K562 (cell line): ENCODE measurements at regions of chr6 and their contacts with region 1.

Region 1: DNA sequence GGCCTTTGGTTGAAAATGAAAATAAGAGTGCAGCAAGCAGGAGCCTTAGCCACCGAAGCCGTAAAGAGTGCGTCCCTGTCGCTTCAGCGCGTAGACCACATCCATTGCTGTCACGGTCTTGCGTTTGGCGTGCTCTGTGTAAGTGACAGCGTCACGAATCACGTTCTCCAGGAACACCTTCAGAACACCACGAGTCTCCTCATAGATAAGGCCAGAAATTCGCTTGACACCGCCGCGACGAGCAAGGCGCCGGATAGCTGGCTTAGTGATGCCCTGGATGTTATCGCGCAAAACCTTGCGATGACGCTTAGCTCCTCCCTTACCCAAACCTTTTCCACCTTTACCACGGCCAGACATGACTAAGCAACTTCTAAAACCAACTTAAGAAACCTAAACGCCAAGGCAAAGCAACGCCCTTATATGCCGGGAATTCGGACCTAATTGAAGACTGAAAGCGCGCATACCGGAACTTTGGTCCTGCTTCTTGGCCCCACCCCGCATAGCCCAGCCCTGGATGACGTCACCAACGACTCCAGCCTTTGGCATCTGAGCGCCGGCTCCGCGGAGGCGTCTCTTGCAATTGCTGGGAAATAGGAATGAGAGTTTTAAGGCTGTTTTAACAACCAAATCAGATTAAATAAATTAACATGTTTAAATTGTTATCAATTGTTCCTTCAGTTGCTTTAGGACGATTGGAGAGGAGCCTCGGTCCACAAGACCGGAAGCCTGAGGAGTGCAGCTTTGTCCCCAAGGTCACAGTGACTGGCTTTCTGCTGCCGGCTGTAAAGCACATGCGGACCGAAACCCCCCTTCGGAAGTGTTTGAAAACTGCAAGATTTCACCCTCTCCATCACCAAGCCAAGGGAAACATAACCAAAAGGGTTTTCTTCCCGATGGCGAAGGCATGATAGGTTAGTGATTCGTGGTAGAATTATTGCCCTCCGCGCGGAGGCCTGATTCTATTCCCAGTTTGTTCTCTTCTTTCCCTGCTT is 79.6 kb upstream of the BTN3A2 start:
- DNase-seq: peak; percentile 89 to 100 (median 92)
- ATAC-seq: peak; percentile 84
- H3K4me3 ChIP-seq: peak overlapping the region; percentile 50
- H3K27ac ChIP-seq: peak overlapping the region; percentile 97
- H3K4me1 ChIP-seq: peaks cover 11 to 19% of the 10 kb centered on the region in 2 experiments; a peak in 4 of 5 replicates
- H3K27me3 ChIP-seq: no peaks in the 10 kb centered on the region
- CTCF ChIP-seq: peak in 1 of 3 experiments; percentile 5; a peak in 2 of 6 replicates
- EP300 ChIP-seq: peak; percentile 96
- POLR2A ChIP-seq: peak; percentile 99
- RAD21 ChIP-seq: peak in 1 of 2 experiments; percentile 41; a peak in 3 of 4 replicates

Region 2: GRCh38 chr6:26183581-26184366 is 101.7 kb before region 1 on chr6:
- CTCF ChIA-PET with region 1: no interaction called
- POLR2A ChIA-PET with region 1: interaction called, 11 read pairs
- in situ Hi-C with region 1: no loop called
- intact Hi-C with region 1: no loop called
- DNase-seq: no peak
- ATAC-seq: no peak
- H3K4me3 ChIP-seq: no peak overlapping the region
- H3K27ac ChIP-seq: no peak overlapping the region
- H3K4me1 ChIP-seq: peaks cover 0 to 18% of the 10 kb centered on the region in 2 experiments; a peak in 4 of 5 replicates
- H3K27me3 ChIP-seq: no peaks in the 10 kb centered on the region
- CTCF ChIP-seq: no peak
- EP300 ChIP-seq: no peak
- POLR2A ChIP-seq: no peak
- RAD21 ChIP-seq: no peak

Region 3: DNA sequence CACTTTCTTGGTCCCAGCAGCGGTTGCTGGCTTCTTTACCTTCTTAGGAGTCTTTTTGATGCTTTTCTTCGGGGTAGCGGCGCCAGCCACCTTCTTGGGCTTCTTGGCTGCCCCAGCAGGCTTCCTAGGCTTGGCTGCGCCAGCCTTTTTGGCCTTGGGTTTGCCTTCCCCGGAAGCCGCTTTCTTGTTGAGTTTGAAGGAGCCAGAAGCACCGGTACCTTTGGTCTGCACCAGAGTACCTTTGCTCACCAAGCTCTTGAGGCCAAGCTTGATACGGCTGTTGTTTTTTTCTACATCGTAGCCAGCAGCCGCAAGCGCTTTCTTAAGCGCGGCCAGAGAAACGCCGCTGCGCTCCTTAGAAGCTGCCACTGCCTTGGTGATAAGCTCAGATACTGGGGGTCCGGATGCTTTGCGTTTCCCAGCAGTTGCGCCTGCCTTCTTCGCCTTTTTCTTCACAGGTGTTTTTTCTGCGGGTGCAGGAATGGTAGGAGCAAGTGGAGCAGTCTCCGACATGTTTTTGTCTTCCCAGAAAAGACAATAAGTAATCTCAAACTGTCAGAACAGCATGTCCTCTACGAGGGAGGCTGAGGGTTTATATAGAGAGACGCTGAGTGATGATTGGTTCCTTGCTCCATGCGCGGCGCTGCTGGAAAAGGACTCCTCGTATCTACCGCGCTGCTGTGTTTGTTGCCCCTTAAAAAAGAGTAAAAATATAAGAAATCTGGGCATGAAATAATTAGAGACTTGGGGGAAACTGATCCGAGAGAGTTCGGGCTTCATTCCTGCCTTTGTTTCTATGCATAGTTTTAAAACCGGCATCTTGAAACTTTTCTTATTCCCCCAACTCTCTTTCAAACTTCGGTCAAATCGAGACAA is 50.8 kb before region 1 on chr6:
- CTCF ChIA-PET with region 1: no interaction called
- POLR2A ChIA-PET with region 1: interaction called, 33 read pairs
- in situ Hi-C with region 1: no loop called
- intact Hi-C with region 1: no loop called
- DNase-seq: peak; percentile 71 to 93 (median 83)
- ATAC-seq: peak; percentile 89
- H3K4me3 ChIP-seq: peak overlapping the region; percentile 40
- H3K27ac ChIP-seq: peak overlapping the region; percentile 73
- H3K4me1 ChIP-seq: peaks cover 16 to 20% of the 10 kb centered on the region in 2 experiments; a peak in 4 of 5 replicates
- H3K27me3 ChIP-seq: no peaks in the 10 kb centered on the region
- CTCF ChIP-seq: no peak
- EP300 ChIP-seq: no peak; the same call in 1 of the 2 replicates
- POLR2A ChIP-seq: peak; percentile 99
- RAD21 ChIP-seq: no peak; a peak in 1 of 4 replicates

Region 4: GRCh38 chr6:26258200-26258977 is 27.1 kb before region 1 on chr6:
- CTCF ChIA-PET with region 1: interaction called, 3 read pairs
- POLR2A ChIA-PET with region 1: interaction called, 42 read pairs
- in situ Hi-C with region 1: no loop called
- intact Hi-C with region 1: no loop called
- DNase-seq: peak in 3 of 4 experiments; percentile 48 to 51 (median 49)
- ATAC-seq: peak; percentile 77
- H3K4me3 ChIP-seq: no peak overlapping the region
- H3K27ac ChIP-seq: no peak overlapping the region
- H3K4me1 ChIP-seq: peaks cover 3 to 11% of the 10 kb centered on the region in 2 experiments; a peak in 3 of 5 replicates
- H3K27me3 ChIP-seq: no peaks in the 10 kb centered on the region
- CTCF ChIP-seq: peak; percentile 41 to 66 (median 56); a peak in 5 of 6 replicates
- EP300 ChIP-seq: no peak
- POLR2A ChIP-seq: no peak
- RAD21 ChIP-seq: peak; percentile 18 to 57; a peak in 2 of 4 replicates

Region 5: GRCh38 chr6:26295691-26296555 is 10.5 kb after region 1 on chr6:
- CTCF ChIA-PET with region 1: no interaction called
- POLR2A ChIA-PET with region 1: interaction called, 53 read pairs
- in situ Hi-C with region 1: no loop called
- intact Hi-C with region 1: no loop called
- DNase-seq: peak; percentile 75 to 95 (median 79)
- ATAC-seq: peak; percentile 63
- H3K4me3 ChIP-seq: no peak overlapping the region
- H3K27ac ChIP-seq: peak overlapping the region; percentile 86
- H3K4me1 ChIP-seq: peaks cover 0 to 45% of the 10 kb centered on the region in 2 experiments; a peak in 4 of 5 replicates
- H3K27me3 ChIP-seq: no peaks in the 10 kb centered on the region
- CTCF ChIP-seq: no peak
- EP300 ChIP-seq: peak; percentile 97
- POLR2A ChIP-seq: no peak
- RAD21 ChIP-seq: peak; percentile 15 to 46; a peak in 2 of 4 replicates

Region 6: GRCh38 chr6:26312501-26313390 is 27.3 kb after region 1 on chr6:
- CTCF ChIA-PET with region 1: no interaction called
- POLR2A ChIA-PET with region 1: interaction called, 26 read pairs
- in situ Hi-C with region 1: no loop called
- intact Hi-C with region 1: loop called (anchors 1 kb)
- DNase-seq: peak; percentile 69 to 95 (median 72)
- ATAC-seq: peak; percentile 76
- H3K4me3 ChIP-seq: peak overlapping the region; percentile 53
- H3K27ac ChIP-seq: peak overlapping the region; percentile 66
- H3K4me1 ChIP-seq: peaks cover 4 to 34% of the 10 kb centered on the region in 2 experiments
- H3K27me3 ChIP-seq: no peaks in the 10 kb centered on the region
- CTCF ChIP-seq: no peak; a peak in 1 of 6 replicates
- EP300 ChIP-seq: peak; percentile 65
- POLR2A ChIP-seq: no peak
- RAD21 ChIP-seq: peak in 1 of 2 experiments; percentile 45; a peak in 2 of 4 replicates

Region 7: DNA sequence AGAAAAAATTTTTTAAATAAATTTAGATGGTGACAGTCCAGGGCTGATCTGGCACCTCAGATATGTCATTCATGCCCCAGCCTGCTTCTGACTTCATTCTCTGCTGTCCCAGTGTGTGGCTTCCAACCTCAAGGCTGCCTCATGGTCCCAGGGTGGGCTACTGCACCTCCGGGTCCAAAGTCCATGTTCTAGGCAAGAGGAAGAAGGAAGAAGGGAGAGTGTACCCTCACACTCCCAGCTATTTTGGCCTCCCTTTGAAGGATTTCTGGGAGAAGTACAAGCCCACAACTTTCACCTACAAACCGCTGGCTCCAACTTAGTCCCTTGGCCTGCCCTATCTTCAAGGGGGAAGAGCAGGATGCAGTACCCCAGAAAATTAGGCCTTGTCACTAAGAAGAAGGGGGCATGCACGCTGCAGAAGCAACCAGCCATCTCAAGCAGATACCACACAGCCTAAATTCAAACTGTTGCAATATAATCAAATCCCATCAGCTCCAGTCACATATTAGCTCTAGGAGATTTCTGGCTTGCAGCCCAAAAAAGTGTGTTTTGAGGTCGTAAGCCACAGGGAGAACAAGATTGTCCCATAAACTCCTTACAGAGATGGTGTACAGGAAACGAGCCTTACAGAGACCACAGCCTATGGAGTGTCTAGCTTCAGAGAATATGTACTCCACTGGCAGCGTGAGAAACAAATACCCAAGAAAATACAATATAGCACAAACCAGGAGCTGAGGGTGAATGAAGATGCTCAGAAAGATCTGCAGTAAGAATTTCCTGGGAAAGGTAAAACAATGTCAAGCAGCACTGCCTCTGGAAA is 78.7 kb after region 1 on chr6:
- CTCF ChIA-PET with region 1: no interaction called
- POLR2A ChIA-PET with region 1: no interaction called
- in situ Hi-C with region 1: no loop called
- intact Hi-C with region 1: no loop called
- DNase-seq: peak in 2 of 4 experiments; percentile 18 to 50
- ATAC-seq: peak; percentile 53
- H3K4me3 ChIP-seq: peak overlapping the region; percentile 44
- H3K27ac ChIP-seq: peak overlapping the region; percentile 78
- H3K4me1 ChIP-seq: peaks cover 11 to 22% of the 10 kb centered on the region in 2 experiments
- H3K27me3 ChIP-seq: no peaks in the 10 kb centered on the region
- CTCF ChIP-seq: no peak
- EP300 ChIP-seq: no peak
- POLR2A ChIP-seq: no peak
- RAD21 ChIP-seq: no peak

Region 8: DNA sequence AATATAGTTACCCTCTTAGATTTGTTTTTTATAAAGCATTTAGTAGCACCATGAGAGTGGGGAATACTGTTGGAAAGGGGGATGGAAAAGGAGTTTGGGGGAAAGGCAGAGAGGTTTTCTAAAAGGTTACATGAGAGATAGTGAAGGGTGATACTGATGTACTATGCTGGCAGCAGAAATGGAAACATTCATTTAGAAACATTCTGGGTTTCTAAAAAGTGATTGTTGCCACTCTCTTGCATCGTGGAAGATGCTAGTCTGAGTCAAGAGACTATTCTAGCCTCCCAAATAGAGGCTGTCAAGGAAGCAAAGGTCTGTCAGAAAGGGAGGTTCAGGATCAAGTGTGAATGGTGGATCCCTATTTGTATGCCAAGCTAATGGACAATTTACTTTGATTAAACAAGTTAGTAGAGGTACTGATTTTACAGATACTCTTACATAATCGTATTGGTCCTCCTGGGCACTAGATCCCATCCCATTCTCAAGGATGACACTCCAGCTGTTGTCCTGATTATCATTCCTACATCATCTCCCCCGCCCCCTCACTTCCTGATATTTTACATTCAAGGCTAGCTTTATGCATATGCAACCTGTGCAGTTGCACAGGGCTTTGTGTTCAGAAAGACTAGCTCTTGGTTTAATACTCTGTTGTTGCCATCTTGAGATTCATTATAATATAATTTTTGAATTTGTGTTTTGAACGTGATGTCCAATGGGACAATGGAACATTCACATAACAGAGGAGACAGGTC is 295.9 kb after region 1 on chr6:
- CTCF ChIA-PET with region 1: no interaction called
- POLR2A ChIA-PET with region 1: no interaction called
- in situ Hi-C with region 1: no loop called
- intact Hi-C with region 1: no loop called
- DNase-seq: no peak
- ATAC-seq: no peak
- H3K4me3 ChIP-seq: no peak overlapping the region
- H3K27ac ChIP-seq: no peak overlapping the region
- H3K4me1 ChIP-seq: peaks cover 12 to 16% of the 10 kb centered on the region in 2 experiments; a peak in 4 of 5 replicates
- H3K27me3 ChIP-seq: no peaks in the 10 kb centered on the region
- CTCF ChIP-seq: no peak
- EP300 ChIP-seq: no peak
- POLR2A ChIP-seq: no peak
- RAD21 ChIP-seq: no peak

Region 9: DNA sequence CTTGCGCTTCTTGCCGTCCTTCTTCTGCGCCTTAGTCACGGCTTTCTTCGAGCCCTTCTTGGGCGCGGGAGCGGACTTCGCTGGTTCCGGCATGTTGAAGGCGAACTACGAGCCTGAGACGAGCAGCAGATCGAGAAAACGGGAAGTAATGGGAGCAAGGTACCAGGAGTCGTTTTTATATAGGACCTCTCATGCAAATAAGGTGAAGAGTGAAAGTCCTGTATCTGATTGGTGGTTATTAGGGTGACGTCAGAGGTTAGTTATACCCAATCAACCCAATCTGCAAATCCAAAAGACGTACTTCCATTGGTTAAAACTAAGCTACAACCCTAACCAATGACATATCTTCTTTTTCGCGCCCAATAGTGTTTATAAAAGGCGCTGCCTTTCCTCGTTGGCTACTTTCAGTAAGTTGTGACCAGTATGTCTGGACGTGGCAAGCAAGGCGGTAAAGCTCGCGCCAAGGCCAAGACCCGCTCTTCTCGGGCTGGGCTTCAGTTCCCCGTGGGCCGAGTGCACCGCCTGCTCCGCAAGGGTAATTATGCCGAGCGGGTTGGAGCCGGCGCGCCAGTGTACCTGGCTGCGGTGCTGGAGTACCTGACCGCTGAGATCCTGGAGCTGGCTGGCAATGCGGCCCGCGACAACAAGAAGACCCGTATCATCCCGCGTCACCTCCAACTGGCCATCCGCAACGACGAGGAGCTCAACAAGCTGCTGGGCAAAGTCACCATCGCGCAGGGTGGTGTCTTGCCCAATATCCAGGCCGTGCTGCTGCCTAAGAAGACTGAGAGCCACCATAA is 861.5 kb after region 1 on chr6:
- CTCF ChIA-PET with region 1: no interaction called
- POLR2A ChIA-PET with region 1: no interaction called
- in situ Hi-C with region 1: no loop called
- intact Hi-C with region 1: loop called (anchors 10 kb)
- DNase-seq: peak; percentile 93 to 99 (median 98)
- ATAC-seq: peak; percentile 68
- H3K4me3 ChIP-seq: peak overlapping the region; percentile 71
- H3K27ac ChIP-seq: peak overlapping the region; percentile 94
- H3K4me1 ChIP-seq: peaks cover 4 to 13% of the 10 kb centered on the region in 2 experiments
- H3K27me3 ChIP-seq: no peaks in the 10 kb centered on the region
- CTCF ChIP-seq: no peak
- EP300 ChIP-seq: no peak; the same call in 1 of the 2 replicates
- POLR2A ChIP-seq: peak; percentile 100
- RAD21 ChIP-seq: no peak; a peak in 1 of 4 replicates